ENCODE measurements at regions of chr2 and their contacts with region 1.

Region 1: DNA sequence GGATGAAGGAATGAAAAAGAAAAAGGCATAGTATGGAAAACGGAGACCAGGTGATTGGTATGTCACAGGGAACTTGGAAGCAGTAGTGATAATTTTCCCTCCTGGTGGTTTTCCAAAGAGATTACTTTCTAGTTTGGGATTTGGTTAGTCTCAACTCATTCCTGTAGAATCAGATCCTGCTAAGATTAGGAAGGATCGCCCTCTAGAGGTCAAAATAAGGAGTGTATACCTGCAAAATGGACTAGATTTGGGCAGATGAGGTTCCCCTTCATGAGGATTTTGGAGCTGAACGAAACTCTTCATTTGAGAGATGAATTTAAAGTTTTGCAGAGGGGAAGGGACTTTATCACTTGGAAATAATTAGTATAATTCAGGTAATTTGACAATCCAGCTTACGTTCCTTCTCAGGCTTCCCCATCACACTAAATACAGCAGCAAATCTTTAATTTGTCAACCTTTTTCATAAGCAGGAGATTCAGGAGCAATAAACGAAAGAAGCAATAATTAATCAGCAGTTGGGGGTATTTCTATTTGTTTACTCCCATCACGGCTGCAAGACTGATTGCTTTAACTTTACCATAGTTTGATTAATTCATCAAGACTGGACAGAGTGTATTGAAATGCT is 65.2 kb downstream of the CCDC195 start:
- DNase-seq: peak; percentile 11
- H3K4me3 ChIP-seq: no peak overlapping the region
- H3K27ac ChIP-seq: no peak overlapping the region
- H3K27me3 ChIP-seq: peaks cover 3% of the 10 kb centered on the region
- CTCF ChIP-seq: peak; percentile 84

Region 2: GRCh38 chr2:224357098-224357901 is 293.6 kb before region 1 on chr2:
- CTCF ChIA-PET with region 1: interaction called, 43 read pairs
- POLR2A ChIA-PET with region 1: no interaction called
- DNase-seq: peak; percentile 30
- H3K4me3 ChIP-seq: no peak overlapping the region
- H3K27ac ChIP-seq: no peak overlapping the region
- H3K27me3 ChIP-seq: peaks cover 2% of the 10 kb centered on the region
- CTCF ChIP-seq: peak; percentile 74

Measured in AG04450 (cell line).